ENCODE measurements at regions of chr12 and their contacts with region 1.

Region 1: DNA sequence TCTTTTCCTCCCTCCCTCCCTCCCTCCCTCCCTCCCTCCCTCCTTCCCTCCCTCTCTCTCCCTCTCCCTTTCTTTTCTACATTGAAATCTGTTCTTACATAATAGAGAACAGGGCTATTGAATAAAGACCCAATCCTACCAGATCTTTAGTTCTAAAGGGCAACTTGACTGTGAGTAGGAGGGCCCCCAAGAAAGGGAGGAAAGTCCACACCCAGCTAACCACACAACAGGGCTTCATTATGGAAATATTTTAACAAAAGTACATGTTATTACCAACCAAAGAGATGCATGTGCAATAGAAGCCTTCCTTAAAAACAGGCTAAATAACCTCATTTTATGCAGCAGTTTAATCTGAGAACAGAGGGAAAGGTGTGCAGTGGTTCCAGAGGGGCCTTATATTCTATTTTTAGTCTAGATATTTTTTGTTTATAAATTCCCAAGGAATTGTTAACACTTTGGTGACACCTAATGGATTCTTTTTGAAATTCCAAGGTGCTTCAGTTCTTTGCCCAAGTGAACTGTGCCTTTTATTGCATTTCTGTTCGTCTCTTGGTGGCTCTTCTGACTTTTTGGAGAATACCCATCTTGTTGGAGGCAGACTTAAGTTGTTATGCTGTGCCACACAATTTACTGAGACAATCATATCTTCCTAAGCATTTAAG is 63.0 kb downstream of the GNS start:
- DNase-seq: peak; percentile 53
- H3K4me3 ChIP-seq: no peak overlapping the region
- H3K27ac ChIP-seq: no peak overlapping the region
- H3K4me1 ChIP-seq: peaks cover 13% of the 10 kb centered on the region
- H3K27me3 ChIP-seq: no peaks in the 10 kb centered on the region
- CTCF ChIP-seq: peak; percentile 54

Region 2: GRCh38 chr12:64273527-64274403 is 422.4 kb before region 1 on chr12:
- CTCF ChIA-PET with region 1: no interaction called
- POLR2A ChIA-PET with region 1: no interaction called
- intact Hi-C with region 1: loop called (anchors 10 kb)
- DNase-seq: peak; percentile 49
- H3K4me3 ChIP-seq: no peak overlapping the region
- H3K27ac ChIP-seq: no peak overlapping the region
- H3K4me1 ChIP-seq: no peaks in the 10 kb centered on the region
- H3K27me3 ChIP-seq: no peaks in the 10 kb centered on the region
- CTCF ChIP-seq: peak; percentile 61

Region 3: GRCh38 chr12:64544371-64545080 is 151.7 kb before region 1 on chr12:
- CTCF ChIA-PET with region 1: interaction called, 14 read pairs
- POLR2A ChIA-PET with region 1: no interaction called
- intact Hi-C with region 1: loop called (anchors 1 kb)
- DNase-seq: peak; percentile 81
- H3K4me3 ChIP-seq: no peak overlapping the region
- H3K27ac ChIP-seq: no peak overlapping the region
- H3K4me1 ChIP-seq: peaks cover 10% of the 10 kb centered on the region
- H3K27me3 ChIP-seq: no peaks in the 10 kb centered on the region
- CTCF ChIP-seq: no peak

Region 4: DNA sequence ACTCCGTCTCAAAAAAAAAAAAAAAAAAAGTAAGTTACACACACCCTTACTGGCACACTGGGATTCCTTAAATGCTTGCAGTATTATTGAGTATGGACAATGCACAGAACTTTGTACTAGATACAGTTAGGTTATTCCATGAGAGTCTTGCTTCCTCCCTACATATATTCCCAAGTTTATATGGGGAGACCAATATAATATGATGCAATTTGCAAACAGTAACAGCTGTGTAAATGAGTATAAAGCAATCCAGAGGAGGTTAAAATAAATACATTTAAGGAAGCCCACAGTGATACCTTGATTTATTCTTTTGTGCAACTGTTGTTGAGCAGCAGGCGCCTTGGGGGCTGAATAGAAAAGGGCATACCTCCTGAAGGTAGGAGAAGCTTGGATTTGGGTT is 59.4 kb before region 1 on chr12:
- CTCF ChIA-PET with region 1: interaction called, 12 read pairs
- POLR2A ChIA-PET with region 1: no interaction called
- intact Hi-C with region 1: no loop called
- DNase-seq: no peak
- H3K4me3 ChIP-seq: no peak overlapping the region
- H3K27ac ChIP-seq: peak overlapping the region; percentile 23
- H3K4me1 ChIP-seq: peaks cover 28% of the 10 kb centered on the region
- H3K27me3 ChIP-seq: no peaks in the 10 kb centered on the region
- CTCF ChIP-seq: no peak